GM12878 (cell line): ENCODE measurements at regions of chr10 and their contacts with region 1.

Region 1: DNA sequence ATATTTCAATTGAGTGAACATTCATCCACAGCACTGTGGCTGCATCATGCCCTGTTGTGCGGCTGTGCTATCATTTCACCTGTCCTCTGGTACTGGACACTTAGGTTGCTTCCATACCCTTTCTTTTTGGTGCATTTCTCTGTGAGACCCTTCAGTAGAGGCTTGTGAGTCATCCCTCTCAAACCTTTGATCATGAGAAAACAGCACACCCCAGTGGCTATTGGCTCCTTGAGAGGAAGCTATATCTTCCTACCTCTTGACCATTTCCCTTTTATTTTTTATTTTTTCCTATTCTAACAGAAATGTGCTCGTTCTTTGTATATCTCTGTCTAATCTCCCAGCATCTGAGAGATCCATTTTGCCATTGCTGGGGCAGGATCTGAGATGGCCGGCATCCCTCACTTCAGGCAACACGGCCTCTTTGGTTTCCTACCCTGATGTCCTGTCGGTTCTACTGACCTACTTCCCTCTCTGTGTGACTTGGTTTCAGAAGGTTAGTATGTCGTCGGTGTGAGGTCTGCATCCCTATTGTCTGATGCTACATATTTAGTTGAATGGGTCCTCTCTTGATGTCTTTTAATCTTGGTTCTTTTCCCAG is 23.8 kb upstream of the PIK3AP1 start:
- DNase-seq: no peak
- ATAC-seq: peak; percentile 61
- H3K4me3 ChIP-seq: no peak overlapping the region
- H3K27ac ChIP-seq: no peak overlapping the region
- H3K4me1 ChIP-seq: peaks cover 25% of the 10 kb centered on the region
- H3K27me3 ChIP-seq: no peaks in the 10 kb centered on the region
- CTCF ChIP-seq: peak; percentile 21 to 60 (median 38); a peak in 4 of 6 replicates
- EP300 ChIP-seq: no peak
- POLR2A ChIP-seq: no peak
- RAD21 ChIP-seq: peak; percentile 57

Region 2: GRCh38 chr10:96578633-96579032 is 165.5 kb before region 1 on chr10:
- CTCF ChIA-PET with region 1: no interaction called
- POLR2A ChIA-PET with region 1: no interaction called
- RAD21 ChIA-PET with region 1: no interaction called
- SMC1A ChIA-PET with region 1: no interaction called
- in situ Hi-C with region 1: no loop called
- intact Hi-C with region 1: no loop called
- DNase-seq: no peak
- ATAC-seq: no peak
- H3K4me3 ChIP-seq: no peak overlapping the region
- H3K27ac ChIP-seq: no peak overlapping the region
- H3K4me1 ChIP-seq: peaks cover 6% of the 10 kb centered on the region; the same call in 1 of the 2 replicates
- H3K27me3 ChIP-seq: no peaks in the 10 kb centered on the region
- CTCF ChIP-seq: no peak
- EP300 ChIP-seq: no peak
- POLR2A ChIP-seq: no peak
- RAD21 ChIP-seq: no peak

Region 3: GRCh38 chr10:96642973-96643372 is 101.1 kb before region 1 on chr10:
- CTCF ChIA-PET with region 1: interaction called, 64 read pairs
- POLR2A ChIA-PET with region 1: no interaction called
- RAD21 ChIA-PET with region 1: interaction called, 39 read pairs
- SMC1A ChIA-PET with region 1: interaction called, 34 read pairs
- in situ Hi-C with region 1: no loop called
- intact Hi-C with region 1: loop called (anchors 1 kb)
- DNase-seq: no peak
- ATAC-seq: peak; percentile 78
- H3K4me3 ChIP-seq: no peak overlapping the region
- H3K27ac ChIP-seq: no peak overlapping the region
- H3K4me1 ChIP-seq: peaks cover 34% of the 10 kb centered on the region
- H3K27me3 ChIP-seq: no peaks in the 10 kb centered on the region
- CTCF ChIP-seq: peak; percentile 74 to 94 (median 85)
- EP300 ChIP-seq: no peak
- POLR2A ChIP-seq: no peak
- RAD21 ChIP-seq: peak; percentile 92

Region 4: GRCh38 chr10:96700374-96701099 is 43.5 kb before region 1 on chr10:
- CTCF ChIA-PET with region 1: interaction called, 8 read pairs
- POLR2A ChIA-PET with region 1: interaction called, 10 read pairs
- RAD21 ChIA-PET with region 1: interaction called, 7 read pairs
- SMC1A ChIA-PET with region 1: interaction called, 28 read pairs
- in situ Hi-C with region 1: no loop called
- intact Hi-C with region 1: loop called (anchors 1 kb)
- DNase-seq: no peak
- ATAC-seq: peak; percentile 78
- H3K4me3 ChIP-seq: peak overlapping the region; percentile 82
- H3K27ac ChIP-seq: peak overlapping the region; percentile 85
- H3K4me1 ChIP-seq: peaks cover 45% of the 10 kb centered on the region
- H3K27me3 ChIP-seq: no peaks in the 10 kb centered on the region
- CTCF ChIP-seq: no peak
- EP300 ChIP-seq: peak; percentile 59 to 79; a peak in 2 of 4 replicates
- POLR2A ChIP-seq: peak; percentile 87
- RAD21 ChIP-seq: no peak

Region 5: GRCh38 chr10:96758423-96758822 is 14.3 kb after region 1 on chr10:
- CTCF ChIA-PET with region 1: interaction called, 12 read pairs
- POLR2A ChIA-PET with region 1: interaction called, 4 read pairs
- RAD21 ChIA-PET with region 1: interaction called, 15 read pairs
- SMC1A ChIA-PET with region 1: interaction called, 11 read pairs
- in situ Hi-C with region 1: no loop called
- intact Hi-C with region 1: no loop called
- DNase-seq: peak; percentile 89
- ATAC-seq: peak; percentile 85
- H3K4me3 ChIP-seq: no peak overlapping the region
- H3K27ac ChIP-seq: no peak overlapping the region; the same call in 1 of the 2 replicates
- H3K4me1 ChIP-seq: peaks cover 19% of the 10 kb centered on the region
- H3K27me3 ChIP-seq: no peaks in the 10 kb centered on the region
- CTCF ChIP-seq: no peak
- EP300 ChIP-seq: no peak
- POLR2A ChIP-seq: no peak
- RAD21 ChIP-seq: no peak